AG04450 (cell line): ENCODE measurements at regions of chr4 and their contacts with region 1.

Region 1: GRCh38 chr4:150867148-150867547 is 147.9 kb downstream of the LRBA start:
- DNase-seq: peak; percentile 50
- H3K4me3 ChIP-seq: no peak overlapping the region
- H3K27ac ChIP-seq: no peak overlapping the region
- H3K27me3 ChIP-seq: no peaks in the 10 kb centered on the region
- CTCF ChIP-seq: peak; percentile 65

Region 2: DNA sequence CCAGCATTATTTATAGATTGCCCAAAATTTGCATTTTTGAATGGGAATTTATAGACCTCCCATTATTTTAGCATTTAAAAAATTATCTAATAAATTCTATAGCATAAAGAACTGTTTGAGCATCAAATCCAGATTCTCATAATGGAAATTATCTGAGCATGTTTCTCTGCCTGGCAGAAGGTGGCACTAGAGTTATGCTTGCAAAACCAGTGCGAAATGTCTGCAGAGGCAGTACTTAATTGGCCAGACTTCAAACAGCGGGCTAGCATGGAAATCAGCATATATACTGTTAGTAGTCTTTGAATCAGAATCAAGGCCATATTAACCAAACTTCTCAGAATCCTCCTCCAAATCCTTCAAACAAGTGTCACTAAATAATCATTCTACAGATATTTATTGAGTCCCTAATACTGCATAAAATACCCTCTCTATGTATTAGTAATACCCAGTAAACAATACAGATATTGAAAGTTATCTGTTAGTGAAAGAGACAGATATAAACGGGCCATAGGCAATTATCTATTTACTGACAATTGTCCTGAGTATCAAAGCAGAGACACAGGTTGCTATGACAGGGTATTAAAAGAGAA is 867.6 kb before region 1 on chr4:
- CTCF ChIA-PET with region 1: interaction called, 17 read pairs
- POLR2A ChIA-PET with region 1: no interaction called
- DNase-seq: peak; percentile 61
- H3K4me3 ChIP-seq: no peak overlapping the region
- H3K27ac ChIP-seq: no peak overlapping the region
- H3K27me3 ChIP-seq: no peaks in the 10 kb centered on the region
- CTCF ChIP-seq: peak; percentile 87

Region 3: GRCh38 chr4:150242820-150243458 is 624.2 kb before region 1 on chr4:
- CTCF ChIA-PET with region 1: interaction called, 38 read pairs
- POLR2A ChIA-PET with region 1: no interaction called
- DNase-seq: no peak
- H3K4me3 ChIP-seq: no peak overlapping the region
- H3K27ac ChIP-seq: no peak overlapping the region
- H3K27me3 ChIP-seq: no peaks in the 10 kb centered on the region
- CTCF ChIP-seq: peak; percentile 90

Region 4: GRCh38 chr4:150297861-150298474 is 569.2 kb before region 1 on chr4:
- CTCF ChIA-PET with region 1: interaction called, 196 read pairs
- POLR2A ChIA-PET with region 1: no interaction called
- DNase-seq: peak; percentile 38
- H3K4me3 ChIP-seq: no peak overlapping the region
- H3K27ac ChIP-seq: no peak overlapping the region
- H3K27me3 ChIP-seq: no peaks in the 10 kb centered on the region
- CTCF ChIP-seq: peak; percentile 79

Region 5: DNA sequence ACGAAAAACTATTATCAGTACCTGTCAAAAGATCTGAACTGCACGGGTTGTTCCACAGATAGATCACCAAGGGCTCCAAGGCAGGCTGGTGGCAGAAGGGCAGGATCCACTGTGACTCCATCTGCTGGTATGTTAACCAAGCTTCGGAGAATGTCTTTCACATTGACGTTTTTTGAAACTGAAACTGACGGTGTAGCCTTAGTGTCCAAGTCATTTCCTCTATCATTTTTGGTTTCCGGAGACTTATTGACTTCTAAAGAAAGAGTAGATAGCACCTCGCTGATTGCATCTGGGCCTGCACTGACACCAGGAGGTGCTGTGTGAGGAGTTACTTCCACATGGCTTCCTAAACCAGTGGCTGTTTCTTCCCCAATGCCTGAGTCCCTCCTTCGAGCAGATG is 39.0 kb before region 1 on chr4:
- CTCF ChIA-PET with region 1: interaction called, 12 read pairs
- POLR2A ChIA-PET with region 1: no interaction called
- DNase-seq: no peak
- H3K4me3 ChIP-seq: no peak overlapping the region
- H3K27ac ChIP-seq: no peak overlapping the region
- H3K27me3 ChIP-seq: no peaks in the 10 kb centered on the region
- CTCF ChIP-seq: no peak

Region 6: DNA sequence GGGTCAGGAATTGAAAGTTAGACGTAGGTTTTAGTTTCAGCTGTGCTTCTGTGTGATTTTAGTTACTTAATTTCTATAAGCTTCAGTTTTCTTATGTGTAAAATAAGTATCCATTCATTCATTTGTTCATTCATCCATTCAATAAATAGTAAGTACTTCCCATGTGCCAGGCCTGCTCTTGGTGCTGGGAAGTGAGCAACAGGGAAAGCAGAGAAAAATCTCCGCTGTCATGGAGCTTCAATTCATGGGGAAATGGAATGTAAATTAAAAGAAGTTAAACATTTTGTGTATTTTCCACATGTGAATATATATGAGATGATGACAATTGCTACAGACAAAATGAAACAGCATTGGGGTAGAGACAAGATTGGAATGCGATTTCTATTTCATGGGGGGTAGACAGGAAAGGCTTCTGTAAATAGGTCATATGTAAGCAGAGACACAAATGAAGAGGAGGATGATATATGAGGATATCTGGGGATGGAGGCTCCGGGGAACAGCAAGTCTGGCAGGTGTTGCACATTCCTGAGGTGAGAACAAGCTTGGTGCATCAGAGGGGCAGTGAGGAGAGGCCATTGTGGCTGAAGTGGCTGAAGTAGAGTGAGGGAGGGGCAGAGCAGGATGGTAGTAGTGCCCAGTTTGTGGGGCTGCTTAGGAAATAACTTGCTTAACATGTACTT is 608.0 kb after region 1 on chr4:
- CTCF ChIA-PET with region 1: no interaction called
- POLR2A ChIA-PET with region 1: no interaction called
- DNase-seq: no peak
- H3K4me3 ChIP-seq: no peak overlapping the region
- H3K27ac ChIP-seq: no peak overlapping the region
- H3K27me3 ChIP-seq: peaks cover 3% of the 10 kb centered on the region
- CTCF ChIP-seq: no peak